Endothelial cell of umbilical vein (primary cell): ENCODE measurements at regions of chr10 and their contacts with region 1.

Region 1: DNA sequence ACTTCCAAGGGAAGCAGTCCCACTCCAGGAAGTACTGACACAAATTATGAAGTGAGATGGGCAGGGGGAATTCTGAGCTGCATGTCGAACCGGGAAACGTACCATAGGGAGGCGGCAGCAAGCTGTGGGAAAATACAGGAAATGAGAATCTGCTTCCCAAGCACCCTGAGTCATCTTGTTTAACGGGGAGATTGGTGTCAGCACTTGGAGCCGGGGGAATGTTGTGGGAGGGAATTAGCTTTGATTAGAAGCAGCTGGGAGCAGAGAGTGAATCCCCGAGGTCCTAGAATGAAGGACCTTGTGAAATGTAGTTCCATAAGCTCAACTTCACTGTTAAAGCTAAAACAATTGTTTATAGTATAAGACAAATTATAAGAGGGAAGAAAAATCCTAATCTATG is 141.4 kb upstream of the PRKCQ start:
- DNase-seq: peak; percentile 94
- H3K4me3 ChIP-seq: peak overlapping the region in 1 of 3 experiments; percentile 55
- H3K27ac ChIP-seq: peak overlapping the region; percentile 100
- H3K4me1 ChIP-seq: peaks cover 29% of the 10 kb centered on the region
- H3K27me3 ChIP-seq: no peaks in the 10 kb centered on the region
- CTCF ChIP-seq: peak; percentile 22 to 38
- POLR2A ChIP-seq: no peak

Region 2: DNA sequence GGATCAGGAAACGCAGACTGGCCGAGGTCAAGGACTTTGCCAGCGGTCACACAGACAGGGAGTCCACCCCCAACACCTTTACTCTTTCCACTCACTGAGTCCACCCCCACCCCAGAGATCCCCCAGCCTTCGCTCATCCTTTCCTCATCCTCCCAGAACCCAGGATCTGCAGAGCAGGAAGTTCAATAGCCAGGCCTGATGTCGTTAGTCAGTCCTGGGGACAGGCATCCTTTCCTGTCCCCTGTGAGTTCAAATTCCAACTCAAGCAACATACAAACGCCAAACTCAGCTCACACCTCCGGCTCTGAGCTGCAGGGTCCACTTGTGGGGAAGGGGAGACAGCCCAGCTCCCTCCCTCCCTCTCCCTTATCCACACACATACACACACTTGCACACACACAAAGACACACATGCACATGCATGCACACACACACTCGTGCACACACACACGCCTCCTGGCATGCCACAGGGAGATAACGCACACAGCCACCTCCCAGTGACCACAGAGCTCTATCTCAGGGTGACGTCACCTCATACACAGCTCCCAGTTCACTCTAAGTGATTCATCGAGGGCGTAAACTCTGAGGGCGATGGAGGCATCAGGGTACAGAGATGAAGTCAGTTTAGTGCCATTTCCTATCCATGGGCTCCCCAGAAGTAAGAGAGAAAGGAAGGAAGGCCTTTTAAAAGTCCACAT is 1172.8 kb before region 1 on chr10:
- CTCF ChIA-PET with region 1: no interaction called
- POLR2A ChIA-PET with region 1: no interaction called
- dilution Hi-C with region 1: no loop called
- intact Hi-C with region 1: loop called (anchors 5 kb)
- DNase-seq: peak; percentile 89
- H3K4me3 ChIP-seq: no peak overlapping the region
- H3K27ac ChIP-seq: peak overlapping the region; percentile 93
- H3K4me1 ChIP-seq: peaks cover 48% of the 10 kb centered on the region
- H3K27me3 ChIP-seq: no peaks in the 10 kb centered on the region
- CTCF ChIP-seq: no peak
- POLR2A ChIP-seq: peak; percentile 5

Region 3: GRCh38 chr10:6647811-6648526 is 73.5 kb before region 1 on chr10:
- CTCF ChIA-PET with region 1: no interaction called
- POLR2A ChIA-PET with region 1: no interaction called
- dilution Hi-C with region 1: no loop called
- intact Hi-C with region 1: no loop called
- DNase-seq: peak; percentile 15
- H3K4me3 ChIP-seq: no peak overlapping the region
- H3K27ac ChIP-seq: no peak overlapping the region
- H3K4me1 ChIP-seq: no peaks in the 10 kb centered on the region
- H3K27me3 ChIP-seq: no peaks in the 10 kb centered on the region
- CTCF ChIP-seq: peak; percentile 48 to 73
- POLR2A ChIP-seq: no peak

Region 4: GRCh38 chr10:6667679-6668270 is 53.7 kb before region 1 on chr10:
- CTCF ChIA-PET with region 1: interaction called, 8 read pairs
- POLR2A ChIA-PET with region 1: no interaction called
- dilution Hi-C with region 1: no loop called
- intact Hi-C with region 1: loop called (anchors 1 kb)
- DNase-seq: peak; percentile 38
- H3K4me3 ChIP-seq: no peak overlapping the region
- H3K27ac ChIP-seq: no peak overlapping the region
- H3K4me1 ChIP-seq: peaks cover 11% of the 10 kb centered on the region
- H3K27me3 ChIP-seq: peaks cover 0 to 4% of the 10 kb centered on the region in 2 experiments
- CTCF ChIP-seq: peak; percentile 49
- POLR2A ChIP-seq: no peak

Region 5: DNA sequence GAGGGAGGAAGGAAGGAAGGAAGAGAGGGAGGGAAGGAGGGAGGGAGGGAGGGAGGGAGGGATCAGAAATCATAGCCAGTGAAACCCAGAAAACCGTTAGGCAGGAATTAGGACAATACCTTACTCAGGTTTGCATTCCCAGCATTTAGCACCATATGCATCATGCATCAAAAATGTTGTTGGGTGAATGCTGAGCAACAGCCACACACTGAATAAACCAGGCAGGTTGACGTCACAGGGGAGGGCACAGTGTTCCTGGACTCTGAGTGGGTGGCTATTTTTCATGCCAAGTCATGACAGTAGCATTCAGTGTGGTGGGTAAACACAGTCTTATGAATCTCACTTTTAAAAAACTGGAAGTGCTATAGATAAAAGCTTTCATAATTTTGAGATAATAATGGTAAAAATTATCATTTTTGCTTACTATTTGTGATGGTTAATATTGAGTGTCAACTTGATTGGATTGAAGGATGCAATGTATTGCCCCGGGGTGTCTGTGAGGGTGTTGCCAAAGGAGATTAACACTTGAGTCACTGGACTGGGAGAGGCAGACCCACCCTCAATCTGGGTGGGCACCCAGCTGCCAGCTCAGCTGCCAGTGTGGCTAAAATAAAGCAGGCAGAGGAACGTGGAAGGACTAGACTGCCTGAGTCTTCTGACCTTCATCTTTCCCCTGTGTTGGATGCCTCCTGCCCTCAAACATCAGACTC is 57.7 kb after region 1 on chr10:
- CTCF ChIA-PET with region 1: no interaction called
- POLR2A ChIA-PET with region 1: no interaction called
- dilution Hi-C with region 1: no loop called
- intact Hi-C with region 1: loop called (anchors 2 kb)
- DNase-seq: peak; percentile 33
- H3K4me3 ChIP-seq: no peak overlapping the region
- H3K27ac ChIP-seq: no peak overlapping the region
- H3K4me1 ChIP-seq: no peaks in the 10 kb centered on the region
- H3K27me3 ChIP-seq: peaks cover 8 to 10% of the 10 kb centered on the region in 2 experiments
- CTCF ChIP-seq: no peak
- POLR2A ChIP-seq: no peak

Region 6: DNA sequence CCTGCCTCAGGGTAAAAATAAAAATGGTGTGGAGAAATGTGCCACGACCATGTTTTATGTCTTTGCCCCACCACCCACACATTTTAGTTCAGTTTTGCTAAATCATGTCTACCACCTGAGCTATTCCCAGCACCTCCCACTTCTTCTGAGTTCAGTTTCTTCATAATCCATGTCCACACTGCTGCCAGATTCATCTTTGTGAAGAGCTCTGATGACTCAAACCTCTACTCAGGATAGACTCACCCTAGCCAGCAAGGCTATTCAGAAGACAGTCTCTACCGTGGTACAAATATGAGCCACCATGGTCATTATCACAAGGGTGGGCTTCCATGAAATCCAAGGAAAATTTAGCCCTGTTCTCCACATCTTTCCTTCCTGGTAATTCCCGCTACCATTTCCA is 89.7 kb after region 1 on chr10:
- CTCF ChIA-PET with region 1: no interaction called
- POLR2A ChIA-PET with region 1: no interaction called
- dilution Hi-C with region 1: no loop called
- intact Hi-C with region 1: no loop called
- DNase-seq: no peak
- H3K4me3 ChIP-seq: no peak overlapping the region
- H3K27ac ChIP-seq: no peak overlapping the region
- H3K4me1 ChIP-seq: no peaks in the 10 kb centered on the region
- H3K27me3 ChIP-seq: no peaks in the 10 kb centered on the region
- CTCF ChIP-seq: no peak
- POLR2A ChIP-seq: no peak

Region 7: DNA sequence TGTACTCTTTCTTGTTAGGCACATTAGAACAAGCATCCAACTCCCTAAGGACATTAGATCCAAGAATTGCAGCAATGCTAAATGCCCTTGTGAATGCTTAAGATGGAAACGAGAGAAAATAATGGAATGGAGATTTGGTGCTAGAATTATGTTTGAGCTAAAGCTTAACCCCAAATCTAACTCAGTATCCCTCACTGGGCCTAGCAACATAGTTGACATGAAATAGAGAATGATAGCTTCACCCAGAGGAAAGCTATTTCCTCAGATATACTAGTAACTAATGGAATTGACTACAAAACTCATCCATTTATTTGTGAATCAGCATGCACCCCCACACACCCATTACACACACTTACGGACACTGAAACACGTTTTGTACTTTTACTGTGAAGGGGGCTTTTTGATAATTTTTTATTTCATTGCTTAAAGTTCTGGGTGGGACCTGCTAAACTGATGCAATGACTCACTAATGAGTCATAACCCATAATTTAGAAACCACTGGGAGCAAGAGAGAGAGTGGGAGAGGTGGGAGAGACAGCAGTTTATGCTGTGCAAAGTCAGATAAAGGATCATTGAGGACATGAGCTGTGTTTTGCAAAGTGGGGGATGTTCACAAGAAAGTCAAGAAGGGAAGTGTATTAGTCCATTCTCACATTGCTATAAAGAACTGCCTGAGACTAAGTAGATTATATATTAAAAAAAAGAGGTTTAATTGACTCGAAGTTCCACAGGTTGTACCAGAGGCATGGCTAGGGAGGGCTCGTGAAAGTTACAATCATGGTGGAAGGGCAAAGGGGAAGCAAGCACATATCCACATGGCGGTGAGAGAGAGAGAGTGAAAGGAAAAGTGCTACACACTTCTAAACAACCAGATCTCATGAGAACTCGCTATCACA is 306.7 kb after region 1 on chr10:
- CTCF ChIA-PET with region 1: no interaction called
- POLR2A ChIA-PET with region 1: no interaction called
- dilution Hi-C with region 1: no loop called
- intact Hi-C with region 1: no loop called
- DNase-seq: no peak
- H3K4me3 ChIP-seq: no peak overlapping the region
- H3K27ac ChIP-seq: no peak overlapping the region
- H3K4me1 ChIP-seq: no peaks in the 10 kb centered on the region
- H3K27me3 ChIP-seq: no peaks in the 10 kb centered on the region
- CTCF ChIP-seq: no peak
- POLR2A ChIP-seq: no peak

Region 8: DNA sequence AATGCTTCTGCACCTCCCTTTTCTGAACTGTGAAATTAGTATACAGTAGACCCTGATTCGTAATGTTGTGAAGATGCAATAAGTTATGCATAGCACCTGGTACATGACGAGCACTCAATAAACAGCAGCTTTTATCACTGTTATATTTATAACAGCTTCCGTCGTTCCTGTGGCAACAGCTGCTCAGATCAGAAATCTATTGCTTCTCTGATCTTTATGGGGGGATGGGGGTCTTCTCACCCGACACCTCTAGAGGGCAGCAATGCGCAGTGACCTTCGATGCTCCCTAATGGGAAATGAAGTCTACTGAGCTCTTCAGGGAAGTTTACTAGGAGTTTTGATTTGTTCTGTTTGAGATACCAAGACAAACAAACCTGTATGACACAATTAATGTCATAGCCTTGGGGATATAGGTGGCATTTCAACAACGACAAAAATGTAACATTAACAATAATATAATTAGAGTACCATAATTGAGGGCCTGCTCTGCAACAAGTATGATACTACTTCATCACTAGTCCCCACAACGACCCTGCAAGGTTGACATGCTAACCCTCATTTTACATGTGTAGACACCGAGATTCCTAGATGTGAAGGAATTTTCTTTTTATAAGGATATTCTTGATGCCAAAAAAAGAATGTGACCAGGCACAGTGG is 399.8 kb after region 1 on chr10:
- CTCF ChIA-PET with region 1: interaction called, 3 read pairs
- POLR2A ChIA-PET with region 1: no interaction called
- dilution Hi-C with region 1: no loop called
- intact Hi-C with region 1: loop called (anchors 5 kb)
- DNase-seq: peak; percentile 25
- H3K4me3 ChIP-seq: no peak overlapping the region
- H3K27ac ChIP-seq: no peak overlapping the region
- H3K4me1 ChIP-seq: no peaks in the 10 kb centered on the region
- H3K27me3 ChIP-seq: no peaks in the 10 kb centered on the region
- CTCF ChIP-seq: peak; percentile 62 to 66
- POLR2A ChIP-seq: no peak

Region 9: GRCh38 chr10:8065651-8066050 is 1344.2 kb after region 1 on chr10:
- CTCF ChIA-PET with region 1: no interaction called
- POLR2A ChIA-PET with region 1: no interaction called
- dilution Hi-C with region 1: no loop called
- intact Hi-C with region 1: loop called (anchors 1 kb)
- DNase-seq: peak; percentile 98
- H3K4me3 ChIP-seq: peak overlapping the region in 1 of 3 experiments; percentile 37
- H3K27ac ChIP-seq: peak overlapping the region; percentile 86
- H3K4me1 ChIP-seq: peaks cover 63% of the 10 kb centered on the region
- H3K27me3 ChIP-seq: no peaks in the 10 kb centered on the region
- CTCF ChIP-seq: no peak
- POLR2A ChIP-seq: peak; percentile 64